Ovary (tissue), 10 donors: ENCODE measurements at regions of chr9 and their contacts with region 1.

Region 1: GRCh38 chr9:71285191-71285656 is 163.8 kb upstream of the TRPM3 start:
- DNase-seq: no peak
- H3K4me3 ChIP-seq: no peak overlapping the region
- H3K27ac ChIP-seq: no peak overlapping the region
- H3K4me1 ChIP-seq: no peaks in the 10 kb centered on the region
- H3K27me3 ChIP-seq: no peaks in the 10 kb centered on the region
- CTCF ChIP-seq: peak; percentile 32 to 52 (median 46)
- EP300 ChIP-seq: no peak
- POLR2A ChIP-seq: no peak

Region 2: GRCh38 chr9:72149231-72149975 is 864.2 kb after region 1 on chr9 and contains the start of gene GDA:
- intact Hi-C with region 1: loop called in 1 of 4 experiments (anchors 10 kb)
- DNase-seq: no peak
- H3K4me3 ChIP-seq: peak within 1 kb of the TSS; percentile 23
- H3K27ac ChIP-seq: no peak within 1 kb of the TSS
- H3K4me1 ChIP-seq: peaks cover 2% of the 10 kb centered on the region
- H3K27me3 ChIP-seq: no peaks in the 10 kb centered on the region
- CTCF ChIP-seq: no peak
- EP300 ChIP-seq: no peak
- POLR2A ChIP-seq: no peak
- total RNA-seq, gene GDA: 0.08 to 26.7 (median 1.1) TPM in 6 of 7 donors, not detected in the other